BJ (cell line): ENCODE measurements at regions of chr2 and their contacts with region 1.

Region 1: GRCh38 chr2:68110102-68110501 is 47.3 kb upstream of the C1D start:
- DNase-seq: no peak
- H3K4me3 ChIP-seq: no peak overlapping the region
- H3K27me3 ChIP-seq: no peaks in the 10 kb centered on the region
- CTCF ChIP-seq: no peak

Region 2: DNA sequence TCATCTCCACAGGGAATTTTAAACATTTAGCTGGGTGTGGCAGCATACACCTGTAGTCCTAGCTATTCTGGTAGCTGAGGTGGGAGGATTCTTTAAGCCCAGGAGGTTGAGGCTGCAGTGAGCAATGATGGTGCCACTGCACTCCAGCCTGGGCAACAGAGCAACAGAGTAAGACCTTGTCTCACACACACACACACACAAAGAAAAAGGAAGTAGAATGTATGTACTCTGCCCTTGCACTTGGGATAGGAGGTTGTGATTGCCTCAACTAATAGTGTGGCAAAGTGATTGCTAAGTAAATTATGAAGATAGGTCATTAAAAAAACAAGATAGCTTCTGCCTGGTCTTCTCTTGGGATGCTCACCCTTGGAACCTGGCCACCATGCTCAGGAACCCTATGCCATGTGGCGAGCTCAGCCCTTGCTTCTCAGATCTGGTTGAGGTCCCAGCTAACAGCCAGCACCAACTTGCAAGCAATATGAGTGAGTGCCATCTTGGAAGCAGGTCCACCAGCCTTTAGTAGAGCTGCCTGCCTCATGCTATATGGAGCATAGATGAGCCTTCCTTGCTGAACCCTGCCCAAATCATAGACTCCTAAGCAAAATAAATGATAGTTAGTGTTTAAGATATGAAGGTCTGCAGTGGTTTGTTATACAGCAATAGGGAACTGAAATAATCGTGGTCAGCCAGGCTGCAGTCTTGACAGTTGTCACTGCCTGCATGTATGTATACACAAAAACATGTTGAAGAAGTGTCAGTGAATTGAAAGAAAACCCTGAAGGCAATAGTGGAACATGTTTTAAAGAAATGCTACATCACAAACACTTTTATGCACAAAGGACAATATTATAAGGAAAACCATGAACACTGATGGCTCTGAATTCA is 17.5 kb after region 1 on chr2:
- CTCF ChIA-PET with region 1: interaction called, 5 read pairs
- POLR2A ChIA-PET with region 1: interaction called, 10 read pairs
- DNase-seq: no peak
- H3K4me3 ChIP-seq: no peak overlapping the region
- H3K27me3 ChIP-seq: no peaks in the 10 kb centered on the region
- CTCF ChIP-seq: no peak